MCF 10A (cell line): ENCODE measurements at regions of chr4 and their contacts with region 1.

Region 1: GRCh38 chr4:1693129-1693896 is 9.2 kb upstream of the FAM53A start:
- DNase-seq: peak; percentile 87
- H3K4me3 Mint-ChIP-seq: no peak overlapping the region
- H3K27ac Mint-ChIP-seq: no peak overlapping the region
- H3K4me1 Mint-ChIP-seq: no peaks in the 10 kb centered on the region
- H3K27me3 Mint-ChIP-seq: no peaks in the 10 kb centered on the region
- CTCF ChIP-seq: peak; percentile 96

Region 2: GRCh38 chr4:1706358-1706757 is 13.0 kb after region 1 on chr4:
- CTCF ChIA-PET with region 1: interaction called, 101 read pairs
- POLR2A ChIA-PET with region 1: interaction called, 32 read pairs
- intact Hi-C with region 1: no loop called
- DNase-seq: no peak
- H3K4me3 Mint-ChIP-seq: no peak overlapping the region
- H3K27ac Mint-ChIP-seq: no peak overlapping the region
- H3K4me1 Mint-ChIP-seq: peaks cover 7% of the 10 kb centered on the region
- H3K27me3 Mint-ChIP-seq: no peaks in the 10 kb centered on the region
- CTCF ChIP-seq: no peak

Region 3: GRCh38 chr4:1712216-1713002 is 19.1 kb after region 1 on chr4 and contains the start of gene SLBP:
- CTCF ChIA-PET with region 1: interaction called, 101 read pairs
- POLR2A ChIA-PET with region 1: interaction called, 32 read pairs
- intact Hi-C with region 1: no loop called
- DNase-seq: peak; percentile 96
- H3K4me3 Mint-ChIP-seq: peak within 1 kb of the TSS; percentile 86
- H3K27ac Mint-ChIP-seq: peak within 1 kb of the TSS; percentile 96
- H3K4me1 Mint-ChIP-seq: peaks cover 7% of the 10 kb centered on the region
- H3K27me3 Mint-ChIP-seq: no peaks in the 10 kb centered on the region
- CTCF ChIP-seq: no peak
- total RNA-seq, gene SLBP: 37.1 and 43.5 TPM in 2 replicates

Region 4: DNA sequence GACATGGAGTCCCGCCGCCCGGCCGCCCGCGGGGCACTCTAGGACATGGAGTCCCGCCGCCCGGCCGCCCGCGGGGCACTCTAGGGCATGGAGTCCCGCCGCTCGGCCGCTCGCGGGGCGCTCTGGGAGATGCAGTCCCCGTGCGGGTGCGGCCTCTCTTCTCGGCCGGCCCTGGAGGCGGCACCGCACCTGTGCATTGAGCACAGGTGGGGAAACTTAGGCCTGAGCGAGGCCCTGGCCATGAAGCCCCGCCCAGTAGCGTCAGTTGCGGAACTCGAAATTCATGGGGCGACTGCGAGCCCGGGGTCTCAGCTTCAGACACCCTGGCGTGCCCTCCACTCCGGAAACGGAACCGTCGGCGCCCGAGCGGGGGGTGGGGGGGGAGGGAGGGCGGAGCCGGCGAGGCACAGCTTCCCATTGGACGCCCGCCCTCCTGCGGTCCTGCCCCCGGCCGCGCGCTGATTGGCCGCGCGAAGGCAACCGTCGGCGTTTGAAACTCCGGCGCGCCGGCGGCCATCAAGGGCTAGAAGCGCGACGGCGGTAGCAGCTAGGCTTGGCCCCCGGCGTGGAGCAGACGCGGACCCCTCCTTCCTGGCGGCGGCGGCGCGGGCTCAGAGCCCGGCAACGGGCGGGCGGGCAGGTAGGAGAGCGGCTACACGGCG is 27.8 kb after region 1 on chr4 and contains the starts of genes TACC3 and TMEM129:
- CTCF ChIA-PET with region 1: interaction called, 97 read pairs
- POLR2A ChIA-PET with region 1: interaction called, 18 read pairs
- intact Hi-C with region 1: loop called (anchors 1 kb)
- DNase-seq: peak; percentile 97
- H3K4me3 Mint-ChIP-seq: peak within 1 kb of the TSS; percentile 93
- H3K27ac Mint-ChIP-seq: peak within 1 kb of the TSS; percentile 81
- H3K4me1 Mint-ChIP-seq: peaks cover 20% of the 10 kb centered on the region
- H3K27me3 Mint-ChIP-seq: no peaks in the 10 kb centered on the region
- CTCF ChIP-seq: no peak
- total RNA-seq, gene TACC3: 53.0 and 69.8 TPM in 2 replicates
- total RNA-seq, gene TMEM129: 25.5 and 38.3 TPM in 2 replicates

Region 5: GRCh38 chr4:1726146-1726934 is 33.0 kb after region 1 on chr4:
- CTCF ChIA-PET with region 1: interaction called, 97 read pairs
- POLR2A ChIA-PET with region 1: interaction called, 18 read pairs
- intact Hi-C with region 1: loop called (anchors 1 kb)
- DNase-seq: peak; percentile 87
- H3K4me3 Mint-ChIP-seq: peak overlapping the region; percentile 67
- H3K27ac Mint-ChIP-seq: peak overlapping the region; percentile 94
- H3K4me1 Mint-ChIP-seq: peaks cover 58% of the 10 kb centered on the region
- H3K27me3 Mint-ChIP-seq: no peaks in the 10 kb centered on the region
- CTCF ChIP-seq: peak; percentile 94

Region 6: GRCh38 chr4:1732911-1733310 is 39.6 kb after region 1 on chr4:
- CTCF ChIA-PET with region 1: interaction called, 97 read pairs
- POLR2A ChIA-PET with region 1: interaction called, 18 read pairs
- intact Hi-C with region 1: no loop called
- DNase-seq: no peak
- H3K4me3 Mint-ChIP-seq: no peak overlapping the region
- H3K27ac Mint-ChIP-seq: no peak overlapping the region
- H3K4me1 Mint-ChIP-seq: peaks cover 23% of the 10 kb centered on the region
- H3K27me3 Mint-ChIP-seq: no peaks in the 10 kb centered on the region
- CTCF ChIP-seq: no peak